ENCODE measurements at regions of chr11 and their contacts with region 1.

Region 1: GRCh38 chr11:68818138-68818537 is 23.6 kb downstream of the CPT1A start:
- DNase-seq: no peak
- ATAC-seq: no peak
- H3K4me3 Mint-ChIP-seq: no peak overlapping the region
- H3K27ac Mint-ChIP-seq: no peak overlapping the region
- H3K4me1 Mint-ChIP-seq: peaks cover 22% of the 10 kb centered on the region
- H3K27me3 Mint-ChIP-seq: no peaks in the 10 kb centered on the region

Region 2: GRCh38 chr11:68843703-68844312 is 25.7 kb after region 1 on chr11:
- CTCF ChIA-PET with region 1: interaction called, 13 read pairs
- POLR2A ChIA-PET with region 1: interaction called, 5 read pairs
- DNase-seq: peak; percentile 73
- ATAC-seq: peak; percentile 60
- H3K4me3 Mint-ChIP-seq: peak overlapping the region; percentile 90
- H3K27ac Mint-ChIP-seq: peak overlapping the region; percentile 90
- H3K4me1 Mint-ChIP-seq: peaks cover 39% of the 10 kb centered on the region
- H3K27me3 Mint-ChIP-seq: peaks cover 17% of the 10 kb centered on the region

Region 3: GRCh38 chr11:68869251-68869960 is 51.3 kb after region 1 on chr11:
- CTCF ChIA-PET with region 1: no interaction called
- POLR2A ChIA-PET with region 1: no interaction called
- DNase-seq: peak; percentile 28
- ATAC-seq: peak; percentile 55
- H3K4me3 Mint-ChIP-seq: peak overlapping the region; percentile 77
- H3K27ac Mint-ChIP-seq: no peak overlapping the region
- H3K4me1 Mint-ChIP-seq: peaks cover 18% of the 10 kb centered on the region
- H3K27me3 Mint-ChIP-seq: peaks cover 29% of the 10 kb centered on the region

Measured in activated CD8-positive, alpha-beta T cell treated with anti-CD3 and anti-CD28 coated beads, Interleukin-2, amount 10 ng/mL, durations not matched to agents 7 days and 5 days (primary cell).